GM12878 (cell line): ENCODE measurements at regions of chr16 and their contacts with region 1.

Region 1: GRCh38 chr16:660459-661183 is 7.3 kb upstream of the RHOT2 start:
- DNase-seq: peak; percentile 37
- ATAC-seq: peak; percentile 96
- H3K4me3 ChIP-seq: no peak overlapping the region
- H3K27ac ChIP-seq: no peak overlapping the region
- H3K4me1 ChIP-seq: peaks cover 3% of the 10 kb centered on the region; the same call in 1 of the 2 replicates
- H3K27me3 ChIP-seq: no peaks in the 10 kb centered on the region
- CTCF ChIP-seq: peak; percentile 14 to 62 (median 33); a peak in 4 of 6 replicates
- EP300 ChIP-seq: no peak
- POLR2A ChIP-seq: no peak
- RAD21 ChIP-seq: peak; percentile 23; the same call in 1 of the 2 replicates

Region 2: GRCh38 chr16:578870-579405 is 81.7 kb before region 1 on chr16:
- CTCF ChIA-PET with region 1: no interaction called
- POLR2A ChIA-PET with region 1: no interaction called
- RAD21 ChIA-PET with region 1: no interaction called
- SMC1A ChIA-PET with region 1: interaction called, 3 read pairs
- in situ Hi-C with region 1: no loop called
- intact Hi-C with region 1: loop called (anchors 1 kb)
- DNase-seq: no peak
- ATAC-seq: peak; percentile 97
- H3K4me3 ChIP-seq: no peak overlapping the region
- H3K27ac ChIP-seq: no peak overlapping the region
- H3K4me1 ChIP-seq: no peaks in the 10 kb centered on the region
- H3K27me3 ChIP-seq: no peaks in the 10 kb centered on the region
- CTCF ChIP-seq: peak; percentile 68 to 95 (median 88)
- EP300 ChIP-seq: no peak
- POLR2A ChIP-seq: 0 out of 2 replicates have a peak, but pooled peaks have one; percentile 28
- RAD21 ChIP-seq: peak; percentile 63